Psoas muscle (tissue), 8 donors: ENCODE measurements at regions of chr16 and their contacts with region 1.

Region 1: GRCh38 chr16:35364263-35364662 is 1904.9 kb downstream of the TP53TG3F start:
- DNase-seq: no peak
- ATAC-seq: peak in 3 of 4 donors; percentile 35 to 78 (median 43)
- H3K4me3 ChIP-seq: no peak overlapping the region
- H3K27ac ChIP-seq: no peak overlapping the region
- H3K4me1 ChIP-seq: no peaks in the 10 kb centered on the region
- H3K27me3 ChIP-seq: no peaks in the 10 kb centered on the region
- CTCF ChIP-seq: no peak

Region 2: GRCh38 chr16:35414563-35414962 is 50.3 kb after region 1 on chr16:
- intact Hi-C with region 1: loop called in 1 of 2 experiments (anchors 5 kb)
- DNase-seq: peak in 1 of 2 donors; percentile 42
- ATAC-seq: no peak
- H3K4me3 ChIP-seq: no peak overlapping the region
- H3K27ac ChIP-seq: no peak overlapping the region
- H3K4me1 ChIP-seq: no peaks in the 10 kb centered on the region
- H3K27me3 ChIP-seq: peaks cover 0 to 2% (median 0%) of the 10 kb centered on the region in 3 donors
- CTCF ChIP-seq: no peak